ENCODE measurements at regions of chrX and their contacts with region 1.

Region 1: GRCh38 chrX:20530406-20530921 is 263.8 kb upstream of the RPS6KA3 start:
- DNase-seq: peak; percentile 79
- ATAC-seq: peak; percentile 60
- H3K4me3 ChIP-seq: peak overlapping the region; percentile 66
- H3K27ac ChIP-seq: no peak overlapping the region
- H3K4me1 ChIP-seq: peaks cover 39% of the 10 kb centered on the region
- H3K27me3 ChIP-seq: no peaks in the 10 kb centered on the region
- CTCF ChIP-seq: peak; percentile 84

Region 2: DNA sequence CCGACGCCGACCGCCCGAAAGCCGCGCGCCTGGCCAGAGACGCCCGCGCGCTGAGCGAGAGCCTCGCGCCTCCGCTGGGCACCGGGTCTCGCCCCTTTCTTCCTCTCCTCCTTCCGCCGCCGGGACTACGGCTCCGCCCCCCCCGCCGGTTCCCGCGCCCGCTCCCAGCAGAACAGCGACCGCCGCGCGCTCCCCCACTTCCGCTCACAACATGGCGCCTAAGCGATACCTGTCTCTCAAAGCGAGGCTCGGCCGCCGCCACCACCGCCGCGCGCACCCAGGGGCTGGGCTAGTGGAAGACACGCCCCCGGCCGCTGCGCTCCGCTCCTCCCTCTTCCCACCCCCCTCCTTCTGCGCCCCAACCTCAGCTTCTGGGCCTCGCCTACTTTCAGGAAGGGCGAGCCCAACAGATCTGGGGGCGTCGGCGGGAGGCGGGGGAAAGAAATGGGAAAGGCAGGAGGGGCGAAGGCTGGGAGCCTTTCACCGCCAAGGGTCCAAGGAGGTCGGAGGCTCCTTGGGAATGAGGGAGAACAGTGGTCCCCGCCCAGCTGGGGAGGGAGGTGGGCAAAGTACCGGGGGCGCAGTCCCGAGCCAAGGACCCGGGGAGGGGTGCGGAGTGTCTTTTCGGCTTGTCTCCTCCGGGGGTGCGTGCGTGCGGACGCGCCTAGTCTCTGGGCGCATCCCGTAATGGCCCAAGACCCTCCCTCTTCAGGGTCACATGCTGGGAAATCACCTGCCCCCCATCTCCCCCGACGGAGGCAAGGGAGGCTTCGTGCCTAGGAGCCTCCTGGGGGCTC is 263.5 kb before region 1 on chrX and contains the start of gene RPS6KA3:
- CTCF ChIA-PET with region 1: no interaction called
- POLR2A ChIA-PET with region 1: interaction called, 11 read pairs
- intact Hi-C with region 1: no loop called
- DNase-seq: peak; percentile 82
- ATAC-seq: peak; percentile 72
- H3K4me3 ChIP-seq: peak within 1 kb of the TSS; percentile 84
- H3K27ac ChIP-seq: peak within 1 kb of the TSS; percentile 67
- H3K4me1 ChIP-seq: peaks cover 49% of the 10 kb centered on the region
- H3K27me3 ChIP-seq: no peaks in the 10 kb centered on the region
- CTCF ChIP-seq: no peak
- total RNA-seq, gene RPS6KA3: 22.8 and 24.6 TPM in 2 replicates

Region 3: DNA sequence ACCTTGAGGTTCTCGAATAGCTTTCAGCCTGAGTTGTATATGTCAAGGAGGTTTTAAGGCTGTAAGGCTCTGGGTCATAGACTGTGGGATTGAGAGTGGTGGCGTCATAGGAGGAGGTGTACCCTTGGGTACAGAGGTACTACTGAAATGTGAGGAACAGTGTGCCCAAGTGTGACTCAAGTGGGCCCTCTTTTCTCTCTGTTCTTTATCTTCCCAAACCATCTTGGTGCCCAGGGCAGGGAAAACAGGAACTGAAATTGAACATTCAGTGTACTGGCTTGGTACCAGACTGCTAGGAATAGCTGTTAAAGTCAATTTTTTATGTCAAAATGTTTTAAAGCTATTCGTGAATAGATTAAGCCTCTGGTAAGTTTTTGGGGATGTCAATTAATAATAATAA is 127.5 kb before region 1 on chrX:
- CTCF ChIA-PET with region 1: no interaction called
- POLR2A ChIA-PET with region 1: no interaction called
- intact Hi-C with region 1: no loop called
- DNase-seq: no peak
- ATAC-seq: no peak
- H3K4me3 ChIP-seq: no peak overlapping the region
- H3K27ac ChIP-seq: no peak overlapping the region
- H3K4me1 ChIP-seq: no peaks in the 10 kb centered on the region
- H3K27me3 ChIP-seq: no peaks in the 10 kb centered on the region
- CTCF ChIP-seq: no peak

Region 4: DNA sequence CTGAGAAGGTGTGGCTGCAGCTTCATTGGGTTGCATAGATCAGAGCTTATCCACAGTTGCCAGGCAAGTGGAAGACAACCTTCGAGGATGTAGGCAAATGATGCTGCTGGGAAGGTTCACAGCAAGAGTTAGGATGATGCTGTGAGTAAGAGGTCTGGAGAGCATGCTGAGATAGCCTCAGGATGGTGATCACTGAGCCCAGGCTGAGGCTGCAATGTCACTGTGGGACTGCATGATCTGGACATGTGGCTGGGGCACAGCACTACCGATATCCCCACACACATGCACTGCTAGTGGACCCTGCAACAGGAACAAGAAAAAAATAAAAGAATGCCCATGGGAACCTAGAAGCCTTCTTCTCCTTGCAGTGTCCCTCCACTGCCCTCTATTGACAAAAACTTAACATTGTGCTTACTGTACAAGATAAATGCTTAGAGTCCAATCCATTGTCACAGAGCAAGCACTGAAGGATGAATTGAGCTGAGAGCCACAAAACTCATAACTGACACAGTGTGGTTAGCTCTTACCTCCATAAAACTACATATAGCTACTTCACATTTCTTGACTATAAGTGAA is 949.3 kb after region 1 on chrX:
- CTCF ChIA-PET with region 1: interaction called, 5 read pairs
- POLR2A ChIA-PET with region 1: no interaction called
- intact Hi-C with region 1: loop called (anchors 5 kb)
- DNase-seq: peak; percentile 76
- ATAC-seq: peak; percentile 78
- H3K4me3 ChIP-seq: no peak overlapping the region
- H3K27ac ChIP-seq: no peak overlapping the region
- H3K4me1 ChIP-seq: no peaks in the 10 kb centered on the region
- H3K27me3 ChIP-seq: no peaks in the 10 kb centered on the region
- CTCF ChIP-seq: peak; percentile 70

Region 5: GRCh38 chrX:21745756-21746155 is 1215.3 kb after region 1 on chrX:
- CTCF ChIA-PET with region 1: no interaction called
- POLR2A ChIA-PET with region 1: no interaction called
- intact Hi-C with region 1: loop called (anchors 5 kb)
- DNase-seq: peak; percentile 63
- ATAC-seq: no peak
- H3K4me3 ChIP-seq: no peak overlapping the region
- H3K27ac ChIP-seq: no peak overlapping the region
- H3K4me1 ChIP-seq: no peaks in the 10 kb centered on the region
- H3K27me3 ChIP-seq: no peaks in the 10 kb centered on the region
- CTCF ChIP-seq: peak; percentile 75

Region 6: GRCh38 chrX:21870494-21870893 is 1340.0 kb after region 1 on chrX:
- CTCF ChIA-PET with region 1: interaction called, 13 read pairs
- POLR2A ChIA-PET with region 1: no interaction called
- intact Hi-C with region 1: no loop called
- DNase-seq: no peak
- ATAC-seq: no peak
- H3K4me3 ChIP-seq: no peak overlapping the region
- H3K27ac ChIP-seq: no peak overlapping the region
- H3K4me1 ChIP-seq: no peaks in the 10 kb centered on the region
- H3K27me3 ChIP-seq: no peaks in the 10 kb centered on the region
- CTCF ChIP-seq: no peak

Measured in PC-3 (cell line).